Mammary epithelial cell (primary cell): ENCODE measurements at regions of chrX and their contacts with region 1.

Region 1: DNA sequence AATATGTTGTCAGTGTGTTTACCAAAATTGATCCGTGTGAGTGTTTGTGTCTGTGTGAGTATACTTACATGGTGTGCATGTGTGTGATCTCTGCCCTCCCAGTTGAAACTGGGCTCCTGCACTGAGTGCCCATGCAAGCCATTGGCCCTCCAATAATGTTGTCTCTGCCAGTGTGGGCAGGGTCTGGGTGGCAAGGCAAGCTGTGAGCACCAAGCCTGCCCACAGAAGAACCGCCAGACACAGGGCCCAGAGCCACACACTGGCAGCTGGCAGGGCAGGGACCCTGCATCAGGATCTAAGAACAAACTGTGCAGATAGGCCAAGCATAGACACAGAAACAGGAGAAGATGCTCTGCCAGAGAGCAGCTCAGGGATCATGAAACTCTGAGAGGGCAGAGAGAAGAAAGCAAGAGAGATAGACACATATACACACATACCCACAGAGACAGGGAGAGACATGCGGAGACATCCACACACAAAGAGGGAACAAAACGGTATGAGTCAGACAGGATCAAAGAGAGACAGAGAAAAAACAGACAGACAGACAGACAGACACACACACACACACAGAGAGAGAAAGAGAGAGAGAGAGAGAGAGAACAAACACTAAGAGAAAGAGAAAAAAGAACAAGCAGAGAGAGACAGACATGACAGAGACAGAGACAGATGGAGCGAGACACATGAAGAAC is 555.0 kb downstream of the MID1IP1 start:
- DNase-seq: no peak
- H3K4me3 ChIP-seq: no peak overlapping the region
- H3K27ac ChIP-seq: no peak overlapping the region
- H3K4me1 ChIP-seq: no peaks in the 10 kb centered on the region
- H3K27me3 ChIP-seq: no peaks in the 10 kb centered on the region
- CTCF ChIP-seq: no peak

Region 2: GRCh38 chrX:39427906-39428305 is 71.6 kb after region 1 on chrX:
- CTCF ChIA-PET with region 1: no interaction called
- dilution Hi-C with region 1: loop called (anchors 5 kb)
- in situ Hi-C with region 1: no loop called
- intact Hi-C with region 1: no loop called
- DNase-seq: peak; percentile 57
- H3K4me3 ChIP-seq: no peak overlapping the region
- H3K27ac ChIP-seq: no peak overlapping the region
- H3K4me1 ChIP-seq: no peaks in the 10 kb centered on the region
- H3K27me3 ChIP-seq: no peaks in the 10 kb centered on the region
- CTCF ChIP-seq: no peak

Region 3: GRCh38 chrX:39453889-39454621 is 97.8 kb after region 1 on chrX:
- CTCF ChIA-PET with region 1: no interaction called
- dilution Hi-C with region 1: no loop called
- in situ Hi-C with region 1: no loop called
- intact Hi-C with region 1: no loop called
- DNase-seq: no peak
- H3K4me3 ChIP-seq: no peak overlapping the region
- H3K27ac ChIP-seq: no peak overlapping the region
- H3K4me1 ChIP-seq: no peaks in the 10 kb centered on the region
- H3K27me3 ChIP-seq: no peaks in the 10 kb centered on the region
- CTCF ChIP-seq: no peak